ENCODE measurements at regions of chr9 and their contacts with region 1.

Region 1: DNA sequence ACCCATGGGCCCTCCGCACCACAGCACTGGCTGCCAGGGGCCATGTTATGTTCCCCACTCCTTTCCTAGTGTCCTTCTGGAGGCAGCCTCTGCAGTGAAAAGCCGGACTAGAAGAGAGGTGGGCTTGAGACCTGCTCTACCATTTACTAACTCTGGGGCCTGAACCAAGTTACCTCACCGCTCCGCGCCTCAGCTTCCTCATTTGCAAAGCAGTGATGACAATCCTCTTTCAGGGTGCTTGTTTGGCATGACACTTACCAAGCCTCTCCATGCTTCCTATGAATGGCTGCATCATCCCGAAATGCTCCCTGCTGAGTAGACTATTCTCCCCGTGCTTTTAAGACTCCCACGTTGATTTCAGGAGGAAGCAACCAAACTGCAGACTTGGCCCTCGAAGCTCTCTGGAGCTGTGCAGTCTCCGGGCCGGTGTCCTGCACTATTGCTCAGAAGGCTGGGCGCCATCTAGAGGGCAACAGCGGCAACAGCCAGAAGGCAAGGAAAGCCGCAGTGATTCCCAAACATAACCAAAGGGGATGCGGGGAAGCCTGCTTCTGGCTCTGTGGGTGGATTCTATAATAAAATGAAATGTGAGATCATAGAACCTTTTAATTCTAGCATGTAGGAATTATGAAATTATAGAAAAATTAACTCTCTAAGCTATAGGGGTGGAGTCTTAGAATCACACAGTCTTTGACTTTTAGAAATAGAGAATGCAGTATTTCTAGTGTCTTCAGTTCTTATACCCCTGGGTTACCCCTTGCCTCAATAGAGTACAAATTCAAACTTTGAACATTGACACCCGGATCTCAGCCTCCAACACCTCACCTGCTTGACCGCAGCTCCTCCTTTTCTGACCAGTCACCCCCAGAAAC is 599.8 kb upstream of the BRINP1 start:
- DNase-seq: peak; percentile 39 to 89 (median 72)
- ATAC-seq: peak; percentile 83 to 97 (median 94)
- H3K4me3 ChIP-seq: no peak overlapping the region
- H3K27ac ChIP-seq: no peak overlapping the region
- H3K4me1 ChIP-seq: no peaks in the 10 kb centered on the region
- H3K27me3 ChIP-seq: peaks cover 0 to 4% (median 0%) of the 10 kb centered on the region in 4 donors
- CTCF ChIP-seq: peak; percentile 57 to 92 (median 85)

Region 2: GRCh38 chr9:119544492-119545249 is 424.4 kb before region 1 on chr9:
- intact Hi-C with region 1: loop called in 1 of 3 experiments (anchors 10 kb)
- DNase-seq: no peak
- ATAC-seq: no peak
- H3K4me3 ChIP-seq: no peak overlapping the region
- H3K27ac ChIP-seq: no peak overlapping the region
- H3K4me1 ChIP-seq: no peaks in the 10 kb centered on the region
- H3K27me3 ChIP-seq: no peaks in the 10 kb centered on the region
- CTCF ChIP-seq: no peak

Region 3: DNA sequence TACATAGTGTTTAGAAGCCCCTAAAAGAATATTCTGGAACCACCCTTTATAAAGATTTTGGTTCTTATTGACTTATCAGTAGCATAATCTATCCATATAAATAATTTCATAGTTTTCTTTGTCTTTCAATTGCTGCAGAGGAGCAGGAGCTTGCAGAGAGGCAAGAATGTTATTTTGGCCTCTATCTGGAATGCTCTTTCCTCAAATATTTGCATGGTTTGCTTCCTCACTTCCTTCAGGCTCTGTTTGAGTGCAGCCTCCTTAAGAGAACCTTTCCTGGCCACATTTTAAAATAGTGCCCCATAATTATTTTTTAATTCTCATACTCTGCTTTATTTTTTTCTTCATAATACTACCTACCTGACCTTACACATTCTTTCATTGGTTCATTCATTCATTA is 1079.5 kb after region 1 on chr9:
- intact Hi-C with region 1: no loop called
- DNase-seq: no peak
- ATAC-seq: peak in 2 of 4 donors; percentile 50 to 56
- H3K4me3 ChIP-seq: peak overlapping the region in 1 of 4 donors; percentile 38
- H3K27ac ChIP-seq: no peak overlapping the region
- H3K4me1 ChIP-seq: peaks cover 0 to 55% (median 25%) of the 10 kb centered on the region in 3 donors
- H3K27me3 ChIP-seq: no peaks in the 10 kb centered on the region
- CTCF ChIP-seq: no peak

Measured in pancreas (tissue), 10 donors.